AG04449 (cell line): ENCODE measurements at regions of chr12 and their contacts with region 1.

Region 1: GRCh38 chr12:13255792-13256691 is 59.5 kb downstream of the EMP1 start:
- DNase-seq: peak; percentile 38
- H3K4me3 ChIP-seq: peak overlapping the region; percentile 52
- CTCF ChIP-seq: peak; percentile 100

Region 2: DNA sequence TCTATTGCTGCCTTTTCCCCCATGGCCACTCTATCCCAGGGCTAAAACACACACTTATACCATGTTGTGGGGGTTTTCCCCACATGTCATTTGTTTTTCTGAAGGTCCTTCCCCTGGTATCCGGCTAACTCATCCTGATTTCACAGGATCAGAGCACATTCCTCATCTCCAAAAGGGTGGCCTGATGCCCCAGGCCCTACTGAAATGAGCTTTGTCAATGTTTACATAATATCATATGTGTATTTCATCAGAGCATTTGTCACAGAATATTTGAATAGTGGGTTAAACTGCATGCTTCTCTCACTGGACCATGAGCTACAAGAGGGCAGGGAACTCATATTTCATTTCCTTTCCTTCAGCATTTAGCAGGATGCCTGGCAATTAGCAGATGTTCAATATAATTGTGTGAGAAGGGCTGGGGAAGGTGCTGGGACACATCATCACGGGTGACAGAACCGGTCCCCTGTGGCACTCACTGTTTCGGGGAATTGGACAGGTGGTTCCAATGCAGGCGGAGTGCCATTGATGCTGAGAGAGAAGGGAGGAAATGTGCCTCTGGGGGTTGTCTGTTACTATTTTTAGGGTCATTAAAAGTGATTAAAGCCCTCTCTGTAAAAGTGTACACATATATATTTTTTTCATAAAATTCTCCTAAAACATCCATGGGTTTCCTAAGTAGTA is 32.7 kb before region 1 on chr12:
- CTCF ChIA-PET with region 1: interaction called, 10 read pairs
- POLR2A ChIA-PET with region 1: no interaction called
- DNase-seq: peak; percentile 77
- H3K4me3 ChIP-seq: no peak overlapping the region
- CTCF ChIP-seq: no peak

Region 3: GRCh38 chr12:13241833-13242488 is 14.1 kb before region 1 on chr12:
- CTCF ChIA-PET with region 1: interaction called, 24 read pairs
- POLR2A ChIA-PET with region 1: no interaction called
- DNase-seq: no peak
- H3K4me3 ChIP-seq: no peak overlapping the region
- CTCF ChIP-seq: no peak

Region 4: GRCh38 chr12:13278249-13278787 is 22.3 kb after region 1 on chr12:
- CTCF ChIA-PET with region 1: interaction called, 40 read pairs
- POLR2A ChIA-PET with region 1: no interaction called
- DNase-seq: no peak
- H3K4me3 ChIP-seq: no peak overlapping the region
- CTCF ChIP-seq: peak; percentile 96

Region 5: GRCh38 chr12:13661005-13661887 is 405.2 kb after region 1 on chr12:
- CTCF ChIA-PET with region 1: interaction called, 39 read pairs
- POLR2A ChIA-PET with region 1: interaction called, 4 read pairs
- DNase-seq: no peak
- H3K4me3 ChIP-seq: no peak overlapping the region
- CTCF ChIP-seq: peak; percentile 79